ENCODE measurements at regions of chr12 and their contacts with region 1.

Region 1: DNA sequence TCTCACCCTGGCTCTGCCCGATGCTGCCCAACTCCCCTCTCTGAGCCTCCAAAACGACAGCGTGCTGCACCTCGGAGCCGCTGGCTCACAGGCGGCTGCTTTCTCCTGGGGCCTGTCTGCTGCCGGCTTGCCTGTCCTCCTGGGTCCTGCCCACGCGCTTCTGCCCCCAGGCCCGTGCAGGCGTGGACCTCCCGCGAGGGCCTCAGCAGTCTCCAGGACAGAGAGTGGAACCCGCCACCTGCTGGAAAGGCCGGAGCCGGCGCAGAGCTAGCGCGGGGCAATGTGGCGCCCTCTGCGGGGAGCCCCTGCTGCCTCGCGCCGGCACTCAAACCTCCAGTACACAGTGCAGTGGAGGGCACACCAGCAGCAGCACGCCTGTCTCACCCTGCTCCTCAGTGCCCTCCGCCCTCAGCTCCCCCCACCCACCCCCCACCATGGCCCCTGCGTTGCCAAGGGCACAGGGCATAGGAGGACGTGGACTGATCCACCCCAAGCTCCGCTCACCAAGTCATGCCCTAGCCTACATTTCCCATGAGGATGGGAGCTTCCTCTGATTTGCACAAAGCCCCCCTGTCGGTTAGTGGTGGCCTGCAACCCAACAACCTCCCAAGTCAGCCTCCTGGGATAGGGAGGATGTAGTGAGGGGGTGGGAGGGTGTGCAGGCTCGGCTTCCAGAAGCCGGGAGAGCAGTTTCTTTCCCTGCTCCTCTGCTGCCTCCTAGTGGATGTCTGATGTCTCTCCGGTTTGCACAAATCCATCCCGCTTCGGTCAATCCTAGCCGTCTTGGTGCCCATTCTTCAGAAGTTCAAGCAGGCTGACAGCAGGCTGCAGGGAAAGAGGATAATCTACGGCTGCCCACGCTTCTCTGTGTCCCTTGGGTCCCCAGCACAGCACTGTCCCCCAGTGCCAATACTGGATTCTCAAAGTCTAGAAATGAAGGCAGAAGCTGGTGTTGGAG is 25.2 kb downstream of the KRT8 start:
- DNase-seq: peak; percentile 88
- H3K4me3 ChIP-seq: peak overlapping the region; percentile 10 to 51; a peak in 1 of 4 replicates
- H3K27ac ChIP-seq: no peak overlapping the region
- H3K4me1 ChIP-seq: peaks cover 0 to under 1% of the 10 kb centered on the region in 2 experiments; a peak in 1 of 4 replicates
- H3K27me3 ChIP-seq: no peaks in the 10 kb centered on the region
- CTCF ChIP-seq: peak; percentile 74
- EP300 ChIP-seq: no peak
- RAD21 ChIP-seq: peak; percentile 93

Region 2: GRCh38 chr12:52213512-52214420 is 665.9 kb before region 1 on chr12:
- CTCF ChIA-PET with region 1: interaction called, 19 read pairs
- POLR2A ChIA-PET with region 1: no interaction called
- DNase-seq: peak; percentile 82
- H3K4me3 ChIP-seq: no peak overlapping the region; a peak in 1 of 4 replicates
- H3K27ac ChIP-seq: peak overlapping the region in 1 of 2 experiments; percentile 5; a peak in 1 of 4 replicates
- H3K4me1 ChIP-seq: peaks cover 15 to 68% of the 10 kb centered on the region in 2 experiments; a peak in 3 of 4 replicates
- H3K27me3 ChIP-seq: no peaks in the 10 kb centered on the region
- CTCF ChIP-seq: peak; percentile 95
- EP300 ChIP-seq: 0 out of 4 replicates have a peak, but pooled peaks of 1 of the 2 experiments have one; percentile 32
- RAD21 ChIP-seq: peak; percentile 96

Region 3: DNA sequence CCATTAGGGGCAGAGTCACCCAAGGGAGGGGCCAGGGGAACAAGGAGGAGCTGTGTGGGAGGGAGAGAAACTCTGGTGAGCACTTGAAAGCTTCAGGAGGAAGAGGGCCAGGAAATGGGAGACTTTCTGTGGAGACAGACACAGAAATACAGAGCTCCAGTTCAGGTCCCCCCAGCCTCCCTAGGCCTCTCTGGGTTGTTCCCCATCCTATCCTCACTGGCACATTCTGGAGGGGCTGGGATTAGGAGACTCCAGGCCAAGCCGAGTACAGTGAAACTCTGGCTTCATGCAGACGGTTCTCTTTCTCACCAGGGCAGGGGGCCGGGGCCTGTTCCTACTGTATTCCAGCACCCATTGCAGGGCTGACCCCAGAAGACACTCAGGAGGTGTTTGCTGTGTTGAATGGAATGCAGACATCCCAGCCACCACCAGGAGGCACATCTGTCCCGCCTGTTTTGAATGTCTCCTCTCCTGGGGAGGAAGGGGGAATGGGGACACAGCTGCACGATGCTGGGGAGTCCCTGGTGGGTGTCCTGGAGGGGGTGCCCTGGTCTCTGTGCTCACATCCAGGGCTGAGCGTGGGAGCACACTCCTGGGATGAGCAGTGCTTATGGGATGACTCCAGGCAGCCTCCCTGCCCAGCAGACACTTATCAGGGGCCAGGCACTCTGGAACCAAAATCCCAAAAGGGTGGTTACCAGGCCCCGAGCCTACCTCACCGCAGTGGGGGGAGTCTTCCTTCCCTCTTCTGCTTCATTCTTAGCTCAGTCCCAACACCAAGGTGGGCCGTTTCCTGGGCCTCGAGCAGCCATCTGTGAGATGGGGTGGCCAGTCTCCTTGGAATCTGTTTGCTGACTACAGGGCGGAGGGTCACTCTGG is 488.7 kb before region 1 on chr12:
- CTCF ChIA-PET with region 1: interaction called, 14 read pairs
- POLR2A ChIA-PET with region 1: no interaction called
- DNase-seq: peak; percentile 44
- H3K4me3 ChIP-seq: no peak overlapping the region
- H3K27ac ChIP-seq: no peak overlapping the region
- H3K4me1 ChIP-seq: peaks cover 0 to 7% of the 10 kb centered on the region in 2 experiments; a peak in 1 of 4 replicates
- H3K27me3 ChIP-seq: peaks cover 46% of the 10 kb centered on the region; the same call in 1 of the 2 replicates
- CTCF ChIP-seq: peak; percentile 62
- EP300 ChIP-seq: no peak
- RAD21 ChIP-seq: peak; percentile 44

Region 4: GRCh38 chr12:52698651-52699340 is 180.9 kb before region 1 on chr12:
- CTCF ChIA-PET with region 1: no interaction called
- POLR2A ChIA-PET with region 1: no interaction called
- DNase-seq: no peak
- H3K4me3 ChIP-seq: no peak overlapping the region
- H3K27ac ChIP-seq: no peak overlapping the region
- H3K4me1 ChIP-seq: no peaks in the 10 kb centered on the region
- H3K27me3 ChIP-seq: peaks cover 67% of the 10 kb centered on the region; the same call in 1 of the 2 replicates
- CTCF ChIP-seq: no peak
- EP300 ChIP-seq: no peak
- RAD21 ChIP-seq: no peak

Region 5: GRCh38 chr12:52748578-52748977 is 131.1 kb before region 1 on chr12:
- CTCF ChIA-PET with region 1: no interaction called
- POLR2A ChIA-PET with region 1: no interaction called
- DNase-seq: no peak
- H3K4me3 ChIP-seq: no peak overlapping the region
- H3K27ac ChIP-seq: no peak overlapping the region
- H3K4me1 ChIP-seq: no peaks in the 10 kb centered on the region; a peak in 1 of 4 replicates
- H3K27me3 ChIP-seq: peaks cover 16% of the 10 kb centered on the region; the same call in 1 of the 2 replicates
- CTCF ChIP-seq: no peak
- EP300 ChIP-seq: no peak
- RAD21 ChIP-seq: no peak

Region 6: GRCh38 chr12:52818386-52819153 is 61.1 kb before region 1 on chr12:
- CTCF ChIA-PET with region 1: interaction called, 10 read pairs
- POLR2A ChIA-PET with region 1: no interaction called
- DNase-seq: no peak
- H3K4me3 ChIP-seq: no peak overlapping the region
- H3K27ac ChIP-seq: no peak overlapping the region
- H3K4me1 ChIP-seq: no peaks in the 10 kb centered on the region
- H3K27me3 ChIP-seq: peaks cover 46% of the 10 kb centered on the region
- CTCF ChIP-seq: no peak
- EP300 ChIP-seq: no peak
- RAD21 ChIP-seq: no peak

Region 7: GRCh38 chr12:52910248-52910883 is 30.7 kb after region 1 on chr12:
- CTCF ChIA-PET with region 1: interaction called, 17 read pairs
- POLR2A ChIA-PET with region 1: no interaction called
- DNase-seq: no peak
- H3K4me3 ChIP-seq: no peak overlapping the region
- H3K27ac ChIP-seq: no peak overlapping the region
- H3K4me1 ChIP-seq: peaks cover 4 to 25% of the 10 kb centered on the region in 2 experiments; a peak in 2 of 4 replicates
- H3K27me3 ChIP-seq: no peaks in the 10 kb centered on the region
- CTCF ChIP-seq: no peak
- EP300 ChIP-seq: no peak
- RAD21 ChIP-seq: no peak

Measured in SK-N-SH (cell line).